CD8-positive, alpha-beta memory T cell (primary cell): ENCODE measurements at regions of chr19 and their contacts with region 1.

Region 1: DNA sequence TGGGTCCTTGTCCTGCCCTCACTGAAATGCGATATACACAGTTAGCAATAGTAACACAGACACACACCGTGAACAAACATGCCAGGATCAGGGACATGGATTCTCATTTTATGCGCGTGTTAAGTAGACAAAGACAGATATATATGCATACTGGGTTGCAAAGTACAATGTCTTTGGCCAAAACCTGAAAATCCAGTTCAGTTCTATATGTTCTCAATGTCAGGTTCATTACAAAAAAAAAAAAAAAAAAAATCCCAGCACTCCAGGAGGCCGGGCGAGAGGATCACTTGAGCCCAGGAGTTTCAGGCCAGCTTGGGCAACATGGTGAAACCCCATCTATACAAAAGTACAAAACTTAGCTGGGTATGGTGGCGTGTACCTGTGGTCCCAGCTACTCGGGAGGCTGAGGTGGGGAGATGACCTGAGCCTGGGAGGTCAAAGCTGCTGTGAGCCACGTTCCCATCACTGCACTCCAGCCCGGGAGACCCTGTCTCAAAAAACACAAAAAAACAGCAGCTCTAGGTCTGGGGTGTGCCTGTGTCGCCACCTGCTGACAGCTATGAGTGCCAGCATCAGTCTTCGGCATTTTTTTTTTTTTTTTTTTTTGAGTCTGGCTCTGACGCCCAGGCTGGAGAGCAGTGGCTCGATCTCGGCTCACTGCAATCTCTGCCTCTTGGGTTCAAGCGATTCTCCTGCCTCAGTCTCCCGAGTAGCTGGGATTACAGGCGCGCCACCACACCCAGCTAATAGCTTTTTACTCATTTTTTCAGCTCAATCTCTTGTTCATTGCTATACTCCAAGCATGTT is 10.3 kb downstream of the AP2S1 start:
- DNase-seq: peak; percentile 28 to 64 (median 49)
- H3K4me3 ChIP-seq: no peak overlapping the region
- H3K4me3 Mint-ChIP-seq: no peak overlapping the region
- H3K27ac ChIP-seq: no peak overlapping the region
- H3K27ac Mint-ChIP-seq: peak overlapping the region in 4 of 8 donors; percentile 24 to 61 (median 44)
- H3K4me1 ChIP-seq: no peaks in the 10 kb centered on the region
- H3K4me1 Mint-ChIP-seq: peaks cover 0 to 5% (median 0%) of the 10 kb centered on the region in 3 donors
- H3K27me3 ChIP-seq: no peaks in the 10 kb centered on the region
- H3K27me3 Mint-ChIP-seq: peaks cover 0 to 2% of the 10 kb centered on the region in 2 donors

Region 2: DNA sequence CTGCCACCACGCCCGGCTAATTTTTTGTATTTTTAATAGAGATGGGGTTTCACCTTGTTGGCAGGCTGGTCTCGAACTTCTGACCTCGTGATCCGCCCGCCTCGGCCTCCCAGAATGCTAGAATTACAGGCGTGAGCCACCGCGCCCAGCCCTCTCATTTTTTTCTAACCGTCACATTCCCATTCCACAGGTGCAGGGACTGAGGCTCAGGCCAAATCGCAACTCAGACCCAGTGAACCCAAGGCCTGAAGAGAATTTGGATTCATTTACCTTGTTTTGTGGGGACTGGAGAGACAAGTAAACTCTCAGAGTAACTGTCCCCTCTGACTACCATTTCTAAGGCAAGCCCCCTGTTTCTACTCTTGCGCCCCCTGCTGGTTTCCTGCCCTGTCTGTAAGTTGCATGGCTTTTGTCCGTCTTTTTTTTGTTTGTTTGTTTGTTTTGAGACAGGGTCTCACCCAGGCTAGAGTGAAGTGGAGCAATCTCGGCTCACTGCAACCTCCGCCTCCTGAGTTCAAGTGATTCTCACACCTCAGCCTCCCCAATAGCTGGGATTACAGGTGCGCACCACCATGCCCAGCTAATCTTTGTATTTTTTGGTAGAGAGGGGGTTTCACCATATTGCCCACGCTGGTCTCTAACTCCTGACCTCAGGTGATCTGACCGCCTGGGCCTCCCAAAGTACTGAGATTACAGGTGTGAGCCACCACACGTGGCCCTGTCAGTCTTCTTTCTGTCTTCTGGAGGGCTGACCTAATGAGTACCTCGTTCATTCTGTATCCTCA is 91.8 kb before region 1 on chr19:
- CTCF ChIA-PET with region 1: interaction called, 89 read pairs
- POLR2A ChIA-PET with region 1: no interaction called
- DNase-seq: peak; percentile 56 to 83 (median 64)
- H3K4me3 ChIP-seq: no peak overlapping the region
- H3K4me3 Mint-ChIP-seq: peak overlapping the region; percentile 29 to 94 (median 59)
- H3K27ac ChIP-seq: no peak overlapping the region
- H3K27ac Mint-ChIP-seq: peak overlapping the region in 5 of 8 donors; percentile 42 to 95 (median 71)
- H3K4me1 ChIP-seq: peaks cover 25% of the 10 kb centered on the region
- H3K4me1 Mint-ChIP-seq: peaks cover 33 to 42% (median 41%) of the 10 kb centered on the region in 3 donors
- H3K27me3 ChIP-seq: no peaks in the 10 kb centered on the region
- H3K27me3 Mint-ChIP-seq: peaks cover 0 to 2% of the 10 kb centered on the region in 2 donors

Region 3: DNA sequence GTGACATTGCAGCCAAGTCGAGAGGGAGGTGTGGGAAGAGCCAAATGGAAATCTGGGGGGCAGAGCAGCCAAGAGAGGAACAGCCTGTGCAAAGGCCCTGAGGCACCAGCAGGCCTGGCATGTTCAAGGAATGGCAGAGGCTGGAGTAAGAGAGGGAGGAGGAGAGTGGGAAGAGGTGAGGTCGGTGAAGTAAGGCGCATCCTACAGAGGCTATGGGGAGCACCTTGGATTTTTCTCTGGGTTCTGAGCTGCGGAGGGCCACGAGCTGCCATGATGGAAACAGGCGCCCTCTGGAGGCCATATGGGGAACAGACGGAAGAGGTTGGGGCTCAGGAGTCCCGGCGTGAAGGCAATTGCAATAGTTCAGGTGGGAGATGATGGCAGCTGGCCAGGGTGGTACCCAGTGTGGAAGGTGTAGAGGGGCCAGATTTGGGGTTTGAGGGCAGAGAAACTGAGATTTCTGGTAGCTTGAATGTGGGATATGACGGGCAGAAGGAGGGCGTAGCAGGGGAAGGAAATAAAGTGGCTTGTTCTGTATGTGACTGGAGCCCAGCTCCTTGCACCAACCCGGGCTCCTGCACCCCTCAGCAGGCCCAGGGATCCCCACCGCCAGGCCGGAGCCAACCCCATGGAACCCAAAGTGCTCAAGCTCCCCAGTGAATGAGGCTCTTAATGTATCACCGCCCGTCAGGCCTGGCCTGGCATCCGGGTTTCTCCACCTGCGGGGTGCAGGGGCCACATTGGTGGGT is 73.6 kb before region 1 on chr19:
- CTCF ChIA-PET with region 1: interaction called, 13 read pairs
- POLR2A ChIA-PET with region 1: no interaction called
- DNase-seq: peak; percentile 41 to 75 (median 44)
- H3K4me3 ChIP-seq: no peak overlapping the region
- H3K4me3 Mint-ChIP-seq: no peak overlapping the region
- H3K27ac ChIP-seq: no peak overlapping the region
- H3K27ac Mint-ChIP-seq: peak overlapping the region in 2 of 8 donors; percentile 53 to 77
- H3K4me1 ChIP-seq: no peaks in the 10 kb centered on the region
- H3K4me1 Mint-ChIP-seq: peaks cover 4 to 6% (median 4%) of the 10 kb centered on the region in 3 donors
- H3K27me3 ChIP-seq: no peaks in the 10 kb centered on the region
- H3K27me3 Mint-ChIP-seq: peaks cover 0 to 1% of the 10 kb centered on the region in 2 donors

Region 4: GRCh38 chr19:46821498-46822409 is 18.6 kb before region 1 on chr19:
- CTCF ChIA-PET with region 1: interaction called, 22 read pairs
- POLR2A ChIA-PET with region 1: no interaction called
- DNase-seq: peak; percentile 40 to 75 (median 48)
- H3K4me3 ChIP-seq: no peak overlapping the region
- H3K4me3 Mint-ChIP-seq: peak overlapping the region in 6 of 7 donors; percentile 38 to 73 (median 52)
- H3K27ac ChIP-seq: no peak overlapping the region
- H3K27ac Mint-ChIP-seq: peak overlapping the region; percentile 76 to 90 (median 86)
- H3K4me1 ChIP-seq: peaks cover 33% of the 10 kb centered on the region
- H3K4me1 Mint-ChIP-seq: peaks cover 24 to 43% (median 33%) of the 10 kb centered on the region in 3 donors
- H3K27me3 ChIP-seq: no peaks in the 10 kb centered on the region
- H3K27me3 Mint-ChIP-seq: no peaks in the 10 kb centered on the region